BJ (cell line): ENCODE measurements at regions of chr2 and their contacts with region 1.

Region 1: GRCh38 chr2:151238527-151239487 is 22.9 kb downstream of the RBM43 start:
- DNase-seq: no peak
- H3K4me3 ChIP-seq: no peak overlapping the region
- H3K27me3 ChIP-seq: no peaks in the 10 kb centered on the region
- CTCF ChIP-seq: peak; percentile 72

Region 2: DNA sequence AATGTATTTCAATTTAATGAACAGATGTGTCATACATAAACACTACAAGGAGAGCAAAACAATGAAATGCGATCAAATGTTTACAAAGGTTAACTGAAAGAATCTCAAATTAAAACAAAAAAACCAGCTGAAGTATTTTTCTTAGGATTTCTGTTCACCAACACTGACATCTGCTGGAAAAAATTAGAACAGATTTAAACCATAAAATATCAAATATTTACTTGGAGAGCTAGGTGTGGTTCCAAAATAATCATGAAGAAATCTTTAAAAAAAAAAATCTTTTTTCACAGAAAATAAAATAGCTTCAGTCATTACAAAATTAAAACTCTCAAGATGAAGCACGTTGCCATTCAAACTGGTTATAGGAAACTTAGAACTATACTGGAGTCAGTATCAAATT is 1665.0 kb before region 1 on chr2:
- CTCF ChIA-PET with region 1: interaction called, 11 read pairs
- POLR2A ChIA-PET with region 1: no interaction called
- DNase-seq: no peak
- H3K4me3 ChIP-seq: no peak overlapping the region
- H3K27me3 ChIP-seq: no peaks in the 10 kb centered on the region
- CTCF ChIP-seq: peak; percentile 34

Region 3: GRCh38 chr2:149597668-149598326 is 1641.0 kb before region 1 on chr2:
- CTCF ChIA-PET with region 1: interaction called, 16 read pairs
- POLR2A ChIA-PET with region 1: no interaction called
- DNase-seq: no peak
- H3K4me3 ChIP-seq: peak overlapping the region; percentile 2; the same call in 1 of the 2 replicates
- H3K27me3 ChIP-seq: no peaks in the 10 kb centered on the region
- CTCF ChIP-seq: peak; percentile 76

Region 4: GRCh38 chr2:151459358-151459757 is 220.6 kb after region 1 on chr2:
- CTCF ChIA-PET with region 1: no interaction called
- POLR2A ChIA-PET with region 1: no interaction called
- DNase-seq: no peak
- H3K4me3 ChIP-seq: no peak overlapping the region
- H3K27me3 ChIP-seq: no peaks in the 10 kb centered on the region
- CTCF ChIP-seq: no peak

Region 5: GRCh38 chr2:151681051-151681450 is 442.2 kb after region 1 on chr2:
- CTCF ChIA-PET with region 1: no interaction called
- POLR2A ChIA-PET with region 1: no interaction called
- DNase-seq: no peak
- H3K4me3 ChIP-seq: no peak overlapping the region
- H3K27me3 ChIP-seq: no peaks in the 10 kb centered on the region; the same call in 1 of the 2 replicates
- CTCF ChIP-seq: no peak